ENCODE measurements at regions of chr3 and their contacts with region 1.

Region 1: GRCh38 chr3:39107388-39108199 is at the starts of genes GORASP1 and TTC21A:
- DNase-seq: peak; percentile 74
- H3K4me3 ChIP-seq: peak within 1 kb of the TSS; percentile 85
- H3K27ac ChIP-seq: peak within 1 kb of the TSS; percentile 77
- H3K4me1 ChIP-seq: no peaks in the 10 kb centered on the region
- H3K27me3 ChIP-seq: no peaks in the 10 kb centered on the region
- CTCF ChIP-seq: no peak
- total RNA-seq, gene GORASP1: 24.3 and 29.2 TPM in 2 replicates
- total RNA-seq, gene TTC21A: 1.4 and 2.1 TPM in 2 replicates

Region 2: DNA sequence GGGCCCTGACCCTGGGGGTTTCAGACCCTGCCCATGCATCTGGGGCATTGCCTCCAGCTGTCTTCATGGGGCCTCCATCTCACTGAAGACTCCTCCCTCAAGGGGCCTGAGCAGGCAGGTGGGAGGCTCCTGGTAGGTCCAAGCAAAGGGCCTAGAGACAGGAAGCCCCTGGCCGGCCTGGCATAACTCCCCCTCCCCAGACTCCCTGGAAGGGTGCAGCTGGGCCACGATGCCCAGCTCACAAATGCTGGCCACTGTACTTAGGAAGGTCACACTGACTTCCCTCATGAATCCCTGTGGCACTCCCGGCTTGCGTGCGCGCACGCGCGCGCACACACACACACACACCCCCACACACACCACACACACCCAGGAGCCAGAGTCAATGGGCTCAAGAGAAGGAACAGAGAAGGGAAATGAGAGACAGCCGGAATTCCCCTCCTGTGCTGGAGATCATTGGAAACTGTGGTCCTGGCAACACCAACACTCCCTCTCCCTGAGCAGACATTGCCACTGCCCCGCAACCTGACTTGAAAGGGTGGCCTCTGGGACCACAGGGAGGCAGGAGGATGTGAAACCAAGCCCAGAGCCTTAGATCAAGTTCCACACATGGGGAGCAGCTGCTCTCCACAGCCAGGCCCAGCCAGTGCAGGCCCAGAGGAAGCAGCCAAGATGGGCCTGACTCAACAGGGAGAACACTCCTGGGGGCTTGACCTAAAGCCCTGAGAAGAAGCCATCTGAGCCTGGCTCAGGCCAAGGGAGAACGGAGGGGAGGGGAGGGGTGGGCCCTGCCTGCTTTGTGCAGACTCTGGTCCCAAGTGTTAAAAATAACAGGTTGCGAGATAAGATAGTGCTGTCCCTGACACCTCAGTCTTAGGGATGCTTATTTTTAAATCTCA is 527.8 kb before region 1 on chr3:
- CTCF ChIA-PET with region 1: no interaction called
- POLR2A ChIA-PET with region 1: no interaction called
- intact Hi-C with region 1: no loop called
- DNase-seq: no peak
- H3K4me3 ChIP-seq: no peak overlapping the region
- H3K27ac ChIP-seq: no peak overlapping the region
- H3K4me1 ChIP-seq: no peaks in the 10 kb centered on the region
- H3K27me3 ChIP-seq: no peaks in the 10 kb centered on the region
- CTCF ChIP-seq: no peak

Region 3: DNA sequence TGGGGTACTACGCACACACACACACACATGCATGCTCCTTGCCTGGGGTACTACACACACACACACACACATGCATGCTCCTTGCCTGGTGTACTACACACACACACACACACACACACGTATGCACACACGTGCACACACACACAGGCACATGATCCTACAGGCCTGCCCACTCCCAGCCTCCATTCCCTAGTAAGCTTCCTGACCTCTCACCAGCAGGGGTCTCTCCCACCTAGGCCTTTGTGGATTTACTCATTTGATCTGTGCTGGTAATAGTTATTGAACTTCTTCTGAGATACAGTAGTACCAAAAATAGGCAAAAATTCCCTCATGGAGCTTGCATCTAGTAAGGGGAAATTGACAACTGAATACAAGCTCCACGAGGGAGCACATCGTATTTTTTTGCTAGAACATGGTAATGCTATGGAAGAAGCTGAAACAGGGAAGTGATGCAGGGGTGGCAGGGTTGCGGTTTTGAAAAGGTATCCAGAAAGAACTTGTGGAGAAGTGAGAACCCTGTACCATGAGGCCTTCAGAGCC is 19.0 kb after region 1 on chr3:
- CTCF ChIA-PET with region 1: no interaction called
- POLR2A ChIA-PET with region 1: no interaction called
- intact Hi-C with region 1: no loop called
- DNase-seq: peak; percentile 40
- H3K4me3 ChIP-seq: no peak overlapping the region
- H3K27ac ChIP-seq: no peak overlapping the region
- H3K4me1 ChIP-seq: no peaks in the 10 kb centered on the region
- H3K27me3 ChIP-seq: no peaks in the 10 kb centered on the region
- CTCF ChIP-seq: peak; percentile 52

Region 4: DNA sequence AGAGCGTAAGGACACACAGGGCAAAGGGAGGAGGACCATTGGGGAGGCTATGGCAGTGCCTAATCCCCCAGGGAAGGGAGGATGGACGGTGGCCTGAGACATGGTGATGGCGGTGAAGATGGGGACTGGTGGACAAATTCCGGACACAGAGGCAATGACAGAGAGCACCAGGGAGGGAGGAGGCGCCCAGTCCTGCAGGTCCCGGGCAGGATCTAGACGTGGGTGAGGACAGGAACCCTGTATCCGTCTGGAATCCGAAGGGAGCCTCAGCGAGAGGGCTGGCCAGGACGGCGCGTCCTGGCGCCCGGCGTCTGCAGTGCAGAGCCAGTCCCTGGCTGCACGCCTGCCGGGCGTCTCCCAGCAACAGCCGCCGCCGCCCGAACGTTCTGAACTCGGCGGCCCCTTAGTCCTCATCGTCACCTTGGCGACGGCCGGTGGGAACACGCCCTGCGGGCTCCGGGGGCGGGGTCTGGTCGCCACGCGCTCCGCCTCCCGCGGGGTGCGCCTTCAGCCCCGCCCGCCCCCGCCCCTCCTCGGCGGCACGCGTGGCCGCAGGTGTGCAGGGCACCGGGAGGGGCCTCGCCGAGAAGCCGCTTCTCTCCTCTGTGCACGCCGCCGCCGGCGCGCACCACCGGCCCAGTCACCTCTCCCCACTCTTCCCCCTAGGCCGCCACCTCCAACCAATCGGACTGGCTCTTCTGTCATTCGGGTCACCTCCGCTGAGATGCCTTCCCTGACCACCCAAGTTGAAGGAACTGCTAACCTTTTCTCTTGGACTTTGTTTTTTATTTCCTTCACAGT is 73.2 kb after region 1 on chr3:
- CTCF ChIA-PET with region 1: no interaction called
- POLR2A ChIA-PET with region 1: no interaction called
- intact Hi-C with region 1: loop called (anchors 10 kb)
- DNase-seq: peak; percentile 74
- H3K4me3 ChIP-seq: peak overlapping the region; percentile 37
- H3K27ac ChIP-seq: no peak overlapping the region
- H3K4me1 ChIP-seq: peaks cover 11% of the 10 kb centered on the region
- H3K27me3 ChIP-seq: no peaks in the 10 kb centered on the region
- CTCF ChIP-seq: no peak

Region 5: DNA sequence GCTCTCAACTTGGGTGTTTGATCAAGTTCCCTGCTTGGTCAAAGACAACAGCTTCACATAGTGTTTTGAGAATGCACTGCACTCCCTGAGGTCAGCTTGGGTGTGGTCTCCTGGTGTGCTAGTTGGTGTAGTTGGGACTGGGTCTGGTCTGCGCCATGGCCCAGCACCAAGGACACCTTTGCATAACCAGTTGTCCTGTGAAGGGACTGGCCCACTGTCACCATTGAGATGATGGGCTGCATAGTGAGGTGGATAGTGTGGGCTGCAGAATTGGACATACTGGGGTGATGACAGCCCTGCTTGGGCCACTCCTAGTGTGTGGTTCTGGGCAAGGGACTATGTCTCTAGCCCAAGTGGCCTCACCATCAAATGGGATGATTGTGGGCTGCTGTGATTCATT is 308.4 kb after region 1 on chr3:
- CTCF ChIA-PET with region 1: no interaction called
- POLR2A ChIA-PET with region 1: no interaction called
- intact Hi-C with region 1: no loop called
- DNase-seq: no peak
- H3K4me3 ChIP-seq: no peak overlapping the region
- H3K27ac ChIP-seq: no peak overlapping the region
- H3K4me1 ChIP-seq: no peaks in the 10 kb centered on the region
- H3K27me3 ChIP-seq: no peaks in the 10 kb centered on the region
- CTCF ChIP-seq: no peak

Region 6: DNA sequence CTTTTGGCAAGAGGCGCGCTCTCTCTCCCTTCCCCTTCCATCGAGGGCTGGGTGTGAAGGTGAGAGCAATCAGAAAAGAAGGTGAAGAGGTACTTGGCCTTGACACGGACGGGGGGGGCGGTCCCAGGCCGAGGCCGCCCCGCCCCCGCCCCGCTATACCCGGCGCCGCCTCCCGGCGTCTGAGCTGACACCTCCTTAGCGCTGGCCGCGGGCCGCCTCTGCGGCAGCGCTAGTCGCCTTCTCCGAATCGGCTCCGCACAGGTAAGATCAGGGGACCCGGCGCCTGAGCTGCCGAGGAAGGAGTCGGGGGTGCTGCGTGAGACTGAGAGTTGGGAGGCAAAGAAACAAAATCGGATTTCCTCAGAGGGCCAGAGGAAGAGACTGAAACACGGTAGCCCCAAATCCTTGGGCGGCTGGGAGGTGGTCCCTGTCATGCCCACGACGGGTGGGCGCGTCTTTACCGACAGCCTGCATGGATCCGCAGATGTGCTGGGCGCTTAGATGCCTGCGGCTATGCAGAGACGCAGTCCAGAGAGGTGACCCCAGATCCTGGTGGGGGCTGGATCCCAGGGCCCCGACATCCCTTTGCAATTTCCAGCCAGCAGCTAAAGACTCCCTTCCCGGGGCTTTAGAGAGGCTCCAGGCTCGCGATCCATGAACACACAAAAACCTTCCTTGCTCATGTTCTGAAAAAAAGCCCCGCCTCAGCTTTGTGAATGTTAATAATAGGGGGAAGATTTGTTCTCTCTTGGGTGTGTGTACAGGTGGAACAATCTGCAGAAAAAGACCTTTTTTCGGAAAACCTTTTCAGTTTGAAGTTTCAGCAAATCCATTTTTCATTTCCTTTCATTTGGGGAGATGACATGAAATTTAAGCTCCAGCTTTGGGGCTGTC is 1279.7 kb after region 1 on chr3 and contains the start of gene ENTPD3:
- CTCF ChIA-PET with region 1: no interaction called
- POLR2A ChIA-PET with region 1: interaction called, 15 read pairs
- intact Hi-C with region 1: no loop called
- DNase-seq: peak; percentile 3
- H3K4me3 ChIP-seq: peak within 1 kb of the TSS; percentile 35
- H3K27ac ChIP-seq: no peak within 1 kb of the TSS
- H3K4me1 ChIP-seq: no peaks in the 10 kb centered on the region
- H3K27me3 ChIP-seq: no peaks in the 10 kb centered on the region
- CTCF ChIP-seq: no peak
- total RNA-seq, gene ENTPD3: 0.54 and 1.3 TPM in 2 replicates

Measured in A673 (cell line).